ENCODE measurements at regions of chr2 and their contacts with region 1.

Region 1: DNA sequence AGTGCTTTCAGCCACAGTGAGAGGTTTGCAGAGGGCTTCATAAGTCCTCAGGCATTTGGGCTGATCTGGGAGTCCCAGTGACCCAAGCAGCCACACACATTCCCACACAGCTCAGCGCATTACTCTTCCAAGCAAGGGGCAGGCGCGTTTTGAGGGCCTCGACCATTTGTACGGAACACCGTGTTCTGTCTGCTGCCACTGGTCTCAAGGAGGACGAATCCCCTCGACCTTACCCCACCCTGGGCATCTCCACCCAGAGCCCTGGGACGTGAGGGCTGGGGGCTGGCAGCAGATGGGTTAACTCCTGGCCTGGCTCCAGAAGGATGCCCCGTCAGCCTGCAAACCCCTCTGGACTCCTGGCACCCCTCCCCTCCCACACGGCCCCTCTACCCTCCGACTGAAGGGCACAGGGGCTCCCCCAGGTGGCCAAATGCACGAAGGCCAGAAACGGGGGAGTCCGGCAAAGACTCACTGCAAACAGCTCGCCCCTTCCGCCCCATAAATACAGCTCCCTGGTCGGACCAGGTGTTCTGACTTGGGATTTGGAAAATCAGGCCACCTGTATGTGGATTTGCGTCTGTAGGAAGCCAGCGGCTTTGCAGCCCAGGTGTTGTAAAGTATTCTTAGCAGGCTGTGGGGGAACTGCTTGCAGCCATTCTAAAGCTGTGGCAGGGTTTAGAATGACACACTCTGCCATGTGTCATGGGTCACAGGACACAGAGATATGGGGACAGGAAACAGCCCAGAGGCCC is 33.6 kb upstream of the PTMA start:
- DNase-seq: peak in 1 of 2 donors; percentile 61
- ATAC-seq: peak; percentile 35 to 55
- H3K4me3 ChIP-seq: no peak overlapping the region
- H3K27ac ChIP-seq: peak overlapping the region; percentile 79 to 83 (median 81)
- H3K4me1 ChIP-seq: peaks cover 24 to 28% of the 10 kb centered on the region in 2 donors
- H3K27me3 ChIP-seq: no peaks in the 10 kb centered on the region
- CTCF ChIP-seq: peak; percentile 79 to 92 (median 92)
- POLR2A ChIP-seq: no peak

Region 2: DNA sequence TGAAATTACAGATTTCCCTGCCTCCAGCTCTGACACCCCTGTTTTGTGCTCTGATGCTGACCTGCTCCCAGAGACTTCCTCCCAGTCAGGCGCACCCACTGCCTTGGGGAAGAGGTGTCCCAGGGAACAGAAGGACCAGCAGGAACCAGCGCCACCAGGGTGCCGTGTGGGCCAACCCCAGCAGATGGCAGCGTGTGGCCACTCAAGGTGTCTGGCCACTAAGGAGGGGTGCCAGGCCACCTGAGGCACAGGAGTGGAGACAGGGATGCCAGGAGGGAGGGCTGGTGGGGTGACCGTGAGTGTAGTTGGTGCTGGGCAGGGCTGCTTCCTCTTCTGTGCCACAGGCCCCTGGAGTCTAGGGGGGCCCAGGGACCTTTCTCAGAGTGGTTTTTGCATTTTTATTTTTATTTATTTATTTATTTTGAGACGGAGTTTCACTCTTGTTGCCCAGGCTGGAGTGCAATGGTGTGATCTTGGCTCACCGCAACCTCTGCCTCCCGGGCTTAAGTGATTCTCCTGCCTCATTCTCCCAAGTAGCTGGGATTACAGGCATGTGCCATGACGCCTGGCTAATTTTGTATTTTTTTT is 26.1 kb before region 1 on chr2:
- in situ Hi-C with region 1: no loop called
- intact Hi-C with region 1: loop called (anchors 1 kb)
- DNase-seq: peak; percentile 63 to 82
- ATAC-seq: peak; percentile 76 to 78
- H3K4me3 ChIP-seq: no peak overlapping the region
- H3K27ac ChIP-seq: peak overlapping the region in 1 of 4 donors; percentile 96
- H3K4me1 ChIP-seq: peaks cover 21% of the 10 kb centered on the region in 2 donors
- H3K27me3 ChIP-seq: no peaks in the 10 kb centered on the region
- CTCF ChIP-seq: peak; percentile 81 to 90 (median 85)
- POLR2A ChIP-seq: no peak

Region 3: GRCh38 chr2:231715258-231715997 is 40.7 kb after region 1 on chr2:
- in situ Hi-C with region 1: loop called (anchors 5 kb)
- intact Hi-C with region 1: loop called (anchors 1 kb)
- DNase-seq: peak; percentile 28 to 62
- ATAC-seq: peak in 1 of 2 donors; percentile 19
- H3K4me3 ChIP-seq: no peak overlapping the region
- H3K27ac ChIP-seq: peak overlapping the region in 3 of 4 donors; percentile 72 to 100 (median 77)
- H3K4me1 ChIP-seq: peaks cover 39% of the 10 kb centered on the region in 2 donors
- H3K27me3 ChIP-seq: no peaks in the 10 kb centered on the region
- CTCF ChIP-seq: peak; percentile 88 to 97 (median 92)
- POLR2A ChIP-seq: no peak

Measured in gastrocnemius medialis (tissue), 4 donors.